K562 (cell line): ENCODE measurements at regions of chr15 and their contacts with region 1.

Region 1: DNA sequence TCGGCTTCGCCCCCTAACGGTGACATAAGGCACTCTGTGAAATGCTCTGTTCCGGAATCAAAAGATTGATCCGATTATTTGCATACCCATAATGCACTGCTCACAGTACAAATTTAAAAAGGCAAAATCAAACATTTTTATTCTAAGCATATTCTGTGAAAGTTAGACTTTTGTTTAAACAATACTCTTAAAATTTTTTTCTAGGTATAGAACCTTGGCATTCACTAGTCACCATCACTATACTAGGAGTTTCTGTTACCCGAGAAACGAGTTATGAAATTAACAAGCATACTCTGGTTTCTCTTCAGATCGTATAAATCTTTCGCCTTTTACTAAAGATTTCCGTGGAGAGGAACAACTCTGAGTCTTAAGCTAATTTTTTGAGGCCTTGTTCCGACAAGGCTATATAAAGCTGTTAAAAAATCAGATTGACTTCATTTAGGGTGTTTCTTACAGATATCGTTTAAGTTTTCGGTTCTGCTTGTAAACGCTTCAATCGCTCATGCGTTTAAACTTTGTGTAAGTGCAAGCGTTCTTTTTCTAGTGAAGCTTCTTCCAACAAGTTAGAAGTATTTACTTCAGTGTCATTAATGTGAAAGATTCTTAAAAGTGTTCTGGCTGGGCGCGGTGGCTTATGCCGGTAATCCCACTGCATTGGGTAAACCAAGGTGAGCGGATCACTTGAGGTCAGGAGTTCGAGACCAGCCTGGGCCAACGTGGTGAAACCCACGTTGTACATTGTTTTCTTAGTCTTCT is at the start of gene RNU5B-1:
- DNase-seq: peak; percentile 76 to 93 (median 80)
- ATAC-seq: peak; percentile 92
- H3K4me3 ChIP-seq: peak within 1 kb of the TSS; percentile 28
- H3K27ac ChIP-seq: peak within 1 kb of the TSS; percentile 93
- H3K4me1 ChIP-seq: peaks cover 14 to 15% of the 10 kb centered on the region in 2 experiments
- H3K27me3 ChIP-seq: no peaks in the 10 kb centered on the region
- CTCF ChIP-seq: peak; percentile 72 to 92 (median 88)
- EP300 ChIP-seq: peak; percentile 72
- POLR2A ChIP-seq: peak; percentile 100
- RAD21 ChIP-seq: peak; percentile 5 to 27; a peak in 3 of 4 replicates
- polyA plus RNA-seq, gene RNU5B-1: not detected

Region 2: DNA sequence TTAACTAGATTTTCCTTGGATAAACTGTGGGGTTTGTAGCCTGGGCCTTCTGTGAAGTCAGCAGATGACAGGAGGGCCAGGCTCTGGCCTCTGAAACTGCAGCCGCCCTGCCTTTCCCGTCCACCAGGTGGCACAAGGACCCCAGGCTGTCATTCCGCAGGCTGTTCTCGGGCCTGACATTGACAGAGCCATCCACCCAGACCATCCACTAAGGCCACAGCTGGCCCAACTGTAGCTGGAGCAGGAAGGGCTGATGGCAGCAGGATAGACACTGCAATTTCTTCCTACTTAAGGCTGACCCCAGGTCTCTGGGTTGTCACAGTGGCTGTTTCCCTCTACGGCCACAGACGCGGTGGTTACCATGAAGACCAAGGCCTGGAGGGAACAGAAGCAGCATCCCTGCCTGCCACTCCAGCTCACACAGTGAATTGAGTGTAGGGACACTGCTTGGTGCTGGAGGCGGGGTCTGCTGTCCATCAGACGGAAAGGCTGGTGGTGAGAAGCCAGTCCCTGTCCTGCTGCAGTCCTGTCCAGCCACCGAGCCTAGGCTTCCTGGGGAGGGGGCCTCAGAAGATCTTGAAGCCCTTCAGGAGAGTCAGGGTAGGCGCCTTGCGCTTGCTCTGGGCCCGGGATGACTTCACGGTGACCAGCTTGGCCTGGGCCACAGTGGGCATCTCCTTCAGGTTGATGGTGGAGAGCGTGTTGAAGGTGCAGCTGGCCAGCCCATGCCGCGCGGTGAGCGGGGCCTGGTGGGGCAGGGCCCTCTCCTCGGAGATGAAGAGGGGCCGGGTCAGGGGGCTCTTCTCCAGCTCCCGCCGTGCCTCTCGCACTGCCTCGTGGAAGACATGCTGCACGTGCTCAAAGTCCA is 250.0 kb before region 1 on chr15:
- CTCF ChIA-PET with region 1: interaction called, 4 read pairs
- POLR2A ChIA-PET with region 1: interaction called, 7 read pairs
- in situ Hi-C with region 1: loop called (anchors 10 kb)
- intact Hi-C with region 1: loop called (anchors 5 kb)
- DNase-seq: peak; percentile 76 to 81 (median 80)
- ATAC-seq: peak; percentile 92
- H3K4me3 ChIP-seq: no peak overlapping the region
- H3K27ac ChIP-seq: no peak overlapping the region
- H3K4me1 ChIP-seq: peaks cover 5 to 11% of the 10 kb centered on the region in 2 experiments; a peak in 3 of 5 replicates
- H3K27me3 ChIP-seq: peaks cover 0 to 16% of the 10 kb centered on the region in 2 experiments; a peak in 3 of 5 replicates
- CTCF ChIP-seq: peak; percentile 93 to 94 (median 93)
- EP300 ChIP-seq: no peak
- POLR2A ChIP-seq: no peak
- RAD21 ChIP-seq: peak; percentile 72 to 93

Region 3: GRCh38 chr15:65201905-65202304 is 102.7 kb before region 1 on chr15:
- CTCF ChIA-PET with region 1: no interaction called
- POLR2A ChIA-PET with region 1: interaction called, 54 read pairs
- in situ Hi-C with region 1: no loop called
- intact Hi-C with region 1: no loop called
- DNase-seq: no peak
- ATAC-seq: no peak
- H3K4me3 ChIP-seq: no peak overlapping the region
- H3K27ac ChIP-seq: no peak overlapping the region
- H3K4me1 ChIP-seq: peaks cover 0 to 6% of the 10 kb centered on the region in 2 experiments; a peak in 2 of 5 replicates
- H3K27me3 ChIP-seq: peaks cover 19 to 46% of the 10 kb centered on the region in 2 experiments; a peak in 4 of 5 replicates
- CTCF ChIP-seq: no peak
- EP300 ChIP-seq: no peak
- POLR2A ChIP-seq: no peak
- RAD21 ChIP-seq: no peak

Region 4: DNA sequence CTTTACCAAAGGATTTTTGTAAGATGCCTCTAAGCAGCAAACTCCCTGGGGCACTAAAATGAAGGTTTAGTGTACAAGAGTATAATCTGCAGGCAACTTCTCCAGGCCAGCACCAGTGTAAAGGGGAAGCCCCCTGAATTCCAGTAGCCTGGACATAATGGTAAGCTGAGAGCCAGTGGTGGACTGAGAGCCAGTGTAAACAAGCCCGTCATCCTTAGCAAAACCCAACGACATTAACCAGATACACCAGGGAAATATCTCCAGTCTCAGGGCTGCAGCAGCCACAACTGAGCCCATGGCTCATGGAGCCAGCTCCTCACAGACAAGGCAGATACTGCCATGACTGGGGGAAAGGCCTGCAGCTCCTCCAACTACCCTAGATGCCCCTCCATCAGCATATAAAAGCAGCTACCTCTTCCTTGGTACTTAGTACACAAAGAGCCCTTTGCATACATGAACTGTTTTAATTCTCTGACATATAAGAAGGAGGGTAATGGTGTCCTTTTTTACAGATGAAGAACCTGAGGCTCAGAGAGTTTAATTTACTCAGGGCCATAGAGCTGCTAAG is 39.6 kb before region 1 on chr15:
- CTCF ChIA-PET with region 1: no interaction called
- POLR2A ChIA-PET with region 1: interaction called, 18 read pairs
- in situ Hi-C with region 1: no loop called
- intact Hi-C with region 1: no loop called
- DNase-seq: no peak
- ATAC-seq: no peak
- H3K4me3 ChIP-seq: no peak overlapping the region
- H3K27ac ChIP-seq: no peak overlapping the region
- H3K4me1 ChIP-seq: no peaks in the 10 kb centered on the region; a peak in 1 of 5 replicates
- H3K27me3 ChIP-seq: no peaks in the 10 kb centered on the region
- CTCF ChIP-seq: no peak
- EP300 ChIP-seq: no peak
- POLR2A ChIP-seq: no peak
- RAD21 ChIP-seq: no peak

Region 5: DNA sequence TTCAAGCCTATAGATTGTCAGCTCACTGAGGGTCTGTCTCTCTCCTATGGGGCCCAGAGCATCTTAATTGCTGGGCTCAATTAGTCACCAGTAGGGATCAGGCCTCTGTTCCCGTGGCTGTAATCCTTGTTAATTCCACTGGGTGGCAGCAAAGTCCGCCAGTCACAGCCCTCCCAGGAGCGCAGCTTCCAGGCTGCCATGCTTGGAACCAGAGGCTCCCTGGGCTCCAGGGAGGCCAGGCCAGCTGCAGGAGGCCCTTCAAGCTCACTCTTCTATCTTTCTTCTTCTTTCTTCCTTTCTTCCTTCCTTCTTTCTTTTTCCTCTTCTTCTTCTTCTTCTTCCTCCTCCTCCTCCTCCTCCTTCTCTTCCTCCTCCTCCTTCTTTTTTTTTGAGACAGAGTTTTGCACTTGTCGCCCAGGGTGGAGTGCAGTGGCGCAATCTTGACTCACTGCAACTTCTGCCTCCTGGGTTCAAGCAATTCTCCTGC is 14.3 kb after region 1 on chr15:
- CTCF ChIA-PET with region 1: no interaction called
- POLR2A ChIA-PET with region 1: interaction called, 194 read pairs
- in situ Hi-C with region 1: no loop called
- intact Hi-C with region 1: no loop called
- DNase-seq: peak; percentile 84 to 91 (median 88)
- ATAC-seq: peak; percentile 98
- H3K4me3 ChIP-seq: no peak overlapping the region
- H3K27ac ChIP-seq: no peak overlapping the region
- H3K4me1 ChIP-seq: peaks cover 0 to 4% of the 10 kb centered on the region in 2 experiments; a peak in 2 of 5 replicates
- H3K27me3 ChIP-seq: peaks cover 25 to 48% of the 10 kb centered on the region in 2 experiments
- CTCF ChIP-seq: peak; percentile 90 to 98 (median 98)
- EP300 ChIP-seq: no peak
- POLR2A ChIP-seq: no peak
- RAD21 ChIP-seq: peak; percentile 97 to 98

Region 6: DNA sequence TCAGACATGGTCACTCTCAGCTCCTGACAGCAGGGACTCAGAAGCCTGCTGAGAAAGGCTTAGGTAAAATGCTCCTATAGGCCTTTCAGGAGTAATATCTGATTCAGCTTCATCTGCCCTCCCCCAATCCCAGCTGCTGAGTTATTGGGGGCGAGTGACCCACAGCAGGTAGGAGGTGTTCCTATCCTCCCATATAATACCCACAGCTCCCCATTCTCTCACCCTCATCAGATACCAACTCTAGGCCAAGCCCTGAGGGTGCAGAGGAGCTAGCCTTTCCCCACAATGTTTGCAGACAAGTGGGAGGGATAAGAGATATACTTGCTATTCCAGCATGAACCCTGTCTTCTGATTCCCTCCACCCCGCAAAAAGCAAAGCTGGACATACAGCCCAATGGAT is 55.2 kb after region 1 on chr15:
- CTCF ChIA-PET with region 1: no interaction called
- POLR2A ChIA-PET with region 1: interaction called, 10 read pairs
- in situ Hi-C with region 1: no loop called
- intact Hi-C with region 1: no loop called
- DNase-seq: no peak
- ATAC-seq: no peak
- H3K4me3 ChIP-seq: no peak overlapping the region
- H3K27ac ChIP-seq: no peak overlapping the region
- H3K4me1 ChIP-seq: peaks cover 0 to 16% of the 10 kb centered on the region in 2 experiments; a peak in 4 of 5 replicates
- H3K27me3 ChIP-seq: peaks cover 27 to 43% of the 10 kb centered on the region in 2 experiments
- CTCF ChIP-seq: no peak
- EP300 ChIP-seq: no peak
- POLR2A ChIP-seq: no peak
- RAD21 ChIP-seq: no peak

Region 7: DNA sequence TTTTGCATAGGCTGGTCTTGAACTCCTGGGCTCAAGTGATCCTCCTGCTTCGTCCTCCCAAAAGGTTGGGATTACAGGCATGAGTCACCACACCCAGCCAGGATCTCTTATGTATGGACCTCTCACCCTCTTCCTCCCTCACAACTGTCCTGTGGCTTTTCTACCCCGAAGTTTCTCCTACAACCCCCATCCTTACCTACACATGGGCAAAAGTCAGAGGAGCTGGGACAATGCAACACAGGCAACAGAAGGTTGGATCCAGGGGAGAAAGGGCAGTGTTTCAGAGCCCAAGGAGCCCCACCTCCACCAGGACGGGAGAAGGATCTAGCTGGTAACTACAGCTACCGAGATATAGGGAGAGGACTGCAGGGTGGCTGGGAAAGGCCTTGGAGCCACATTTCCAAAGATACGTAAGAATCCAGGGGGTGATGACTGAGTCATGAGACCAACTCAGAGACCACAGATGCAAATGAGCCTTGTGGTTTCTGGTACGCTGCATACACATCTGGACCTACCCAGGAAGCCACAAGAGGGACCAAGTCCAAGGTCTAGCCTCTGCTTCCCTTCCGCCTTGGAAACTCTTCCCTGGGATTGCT is 104.6 kb after region 1 on chr15:
- CTCF ChIA-PET with region 1: no interaction called
- POLR2A ChIA-PET with region 1: interaction called, 11 read pairs
- in situ Hi-C with region 1: no loop called
- intact Hi-C with region 1: no loop called
- DNase-seq: peak in 2 of 4 experiments; percentile 49 to 54
- ATAC-seq: peak; percentile 62
- H3K4me3 ChIP-seq: no peak overlapping the region
- H3K27ac ChIP-seq: no peak overlapping the region
- H3K4me1 ChIP-seq: peaks cover 6 to 15% of the 10 kb centered on the region in 2 experiments; a peak in 4 of 5 replicates
- H3K27me3 ChIP-seq: peaks cover 6 to 30% of the 10 kb centered on the region in 2 experiments; a peak in 3 of 5 replicates
- CTCF ChIP-seq: no peak
- EP300 ChIP-seq: no peak
- POLR2A ChIP-seq: no peak
- RAD21 ChIP-seq: peak in 1 of 2 experiments; percentile 14; a peak in 1 of 4 replicates